H1 (cell line): ENCODE measurements at regions of chr15 and their contacts with region 1.

Region 1: DNA sequence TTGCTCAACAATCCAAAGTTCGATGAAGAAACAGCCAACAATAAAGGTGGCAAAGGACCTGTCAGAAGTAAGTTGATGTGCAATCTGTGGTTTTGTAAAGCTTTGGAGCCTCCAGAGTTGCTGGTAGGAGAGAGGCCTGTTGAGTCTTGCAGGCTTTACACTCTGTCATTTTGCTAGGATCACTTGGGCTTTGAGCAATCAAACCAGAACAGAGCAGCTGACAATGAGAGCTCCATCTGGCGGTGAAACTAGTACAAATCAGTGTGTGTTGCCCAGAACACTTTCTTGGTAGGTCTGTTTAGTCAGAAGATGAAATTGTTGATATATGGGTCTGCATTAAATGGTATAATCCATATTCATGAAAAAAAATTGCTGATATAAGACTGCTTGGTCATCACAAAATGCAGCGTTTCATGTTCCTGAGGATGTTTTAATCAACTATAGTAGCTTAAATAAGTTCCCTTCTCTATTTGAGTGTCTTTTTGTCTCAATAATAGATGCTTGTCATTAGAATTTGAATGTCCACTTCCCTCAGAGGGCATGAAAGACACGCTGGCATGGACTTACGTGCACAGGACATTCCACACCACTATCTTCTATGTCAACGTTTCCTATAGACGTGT is 25.7 kb downstream of the TMOD2 start:
- DNase-seq: peak in 1 of 2 experiments; percentile 63
- H3K4me3 ChIP-seq: no peak overlapping the region
- H3K27ac ChIP-seq: no peak overlapping the region
- H3K4me1 ChIP-seq: peaks cover 0 to 2% (median 0%) of the 10 kb centered on the region in 4 experiments; a peak in 2 of 7 replicates
- H3K27me3 ChIP-seq: no peaks in the 10 kb centered on the region
- CTCF ChIP-seq: peak in 2 of 3 experiments; percentile 85 to 87; a peak in 3 of 4 replicates
- EP300 ChIP-seq: no peak
- POLR2A ChIP-seq: no peak
- RAD21 ChIP-seq: peak; percentile 61 to 71

Region 2: DNA sequence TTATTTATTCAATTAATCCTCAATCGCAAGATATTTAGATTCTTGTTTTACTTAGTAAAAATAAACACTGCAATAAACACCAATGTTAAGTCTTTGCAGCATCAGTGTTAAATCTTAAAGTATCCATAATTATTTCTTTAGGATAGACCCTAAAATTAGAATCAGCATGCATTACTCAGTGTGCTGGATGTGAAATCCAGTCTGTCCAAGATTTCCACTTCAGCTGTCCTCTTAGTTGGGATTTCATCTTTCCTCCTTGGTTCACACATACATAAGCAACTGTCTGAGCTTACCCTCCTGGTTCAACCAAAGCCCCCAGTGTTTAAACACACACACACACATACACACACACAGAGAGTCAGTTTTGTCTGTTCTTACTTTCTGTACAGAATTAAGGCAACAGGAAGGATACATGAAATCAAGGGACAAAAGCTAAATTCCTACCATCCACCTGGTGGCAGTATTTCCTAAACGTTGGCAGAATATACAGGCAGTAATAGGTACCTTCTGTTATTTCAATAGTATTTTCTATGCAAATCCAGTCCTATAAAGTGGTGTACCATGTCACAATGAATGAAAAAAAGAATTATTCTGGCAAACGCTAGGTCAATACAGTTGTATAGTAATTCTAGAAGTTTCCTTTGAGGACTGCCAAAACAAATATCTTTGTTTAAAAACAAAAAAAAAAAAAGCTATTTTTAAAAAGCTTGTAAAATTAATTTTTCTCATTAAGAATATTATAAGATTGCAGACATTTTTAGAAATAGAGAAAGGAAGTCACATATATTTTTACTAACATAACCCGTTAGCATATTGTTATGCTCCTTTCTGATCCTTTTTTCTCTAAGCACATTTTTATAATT is 127.2 kb before region 1 on chr15:
- CTCF ChIA-PET with region 1: interaction called, 243 read pairs
- POLR2A ChIA-PET with region 1: interaction called, 7 read pairs
- DNase-seq: no peak
- H3K4me3 ChIP-seq: no peak overlapping the region
- H3K27ac ChIP-seq: no peak overlapping the region
- H3K4me1 ChIP-seq: no peaks in the 10 kb centered on the region
- H3K27me3 ChIP-seq: no peaks in the 10 kb centered on the region
- CTCF ChIP-seq: peak in 2 of 3 experiments; percentile 70 to 75; a peak in 3 of 4 replicates
- EP300 ChIP-seq: no peak
- POLR2A ChIP-seq: no peak
- RAD21 ChIP-seq: peak; percentile 93 to 95

Region 3: GRCh38 chr15:51672913-51673857 is 103.9 kb before region 1 on chr15:
- CTCF ChIA-PET with region 1: interaction called, 13 read pairs
- POLR2A ChIA-PET with region 1: no interaction called
- DNase-seq: no peak
- H3K4me3 ChIP-seq: no peak overlapping the region
- H3K27ac ChIP-seq: no peak overlapping the region
- H3K4me1 ChIP-seq: peaks cover 0 to 3% (median 0%) of the 10 kb centered on the region in 4 experiments; a peak in 1 of 7 replicates
- H3K27me3 ChIP-seq: no peaks in the 10 kb centered on the region
- CTCF ChIP-seq: no peak
- EP300 ChIP-seq: no peak
- POLR2A ChIP-seq: no peak
- RAD21 ChIP-seq: no peak

Region 4: DNA sequence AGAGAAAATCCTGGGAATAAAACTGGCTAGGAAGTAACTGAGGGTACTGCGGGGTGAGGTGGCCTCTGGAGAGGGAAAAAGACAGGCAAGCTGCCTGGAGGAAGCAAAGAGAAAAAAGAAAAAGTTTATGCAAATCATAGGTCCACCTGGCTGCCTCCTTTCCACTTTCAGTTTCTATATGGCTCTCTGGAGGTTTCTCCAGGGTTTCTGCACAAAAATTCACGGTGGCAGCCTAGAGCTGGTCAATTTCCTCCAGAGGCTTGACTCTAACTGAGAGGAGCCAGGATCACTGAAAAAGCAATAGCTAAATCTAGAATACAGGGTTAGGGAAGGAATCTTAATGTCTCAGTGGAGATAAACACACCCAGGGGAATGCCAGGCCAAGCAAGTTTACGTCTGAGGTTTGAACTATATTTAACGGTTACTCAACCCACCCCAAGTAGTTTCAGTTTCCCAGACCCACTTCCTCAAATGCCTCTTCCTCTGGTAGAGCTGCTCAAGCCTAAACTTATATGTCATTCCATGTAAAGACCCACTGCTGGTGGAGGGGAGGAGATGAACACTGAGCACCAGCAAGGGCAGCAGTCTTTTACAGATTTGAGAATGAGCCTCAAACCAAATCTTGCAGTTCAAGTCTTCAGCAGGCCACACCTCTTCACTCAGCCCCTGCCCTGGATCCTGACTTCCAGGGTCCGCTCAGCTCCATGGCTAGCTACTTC is 45.4 kb before region 1 on chr15:
- CTCF ChIA-PET with region 1: interaction called, 22 read pairs
- POLR2A ChIA-PET with region 1: no interaction called
- DNase-seq: no peak
- H3K4me3 ChIP-seq: no peak overlapping the region
- H3K27ac ChIP-seq: no peak overlapping the region
- H3K4me1 ChIP-seq: peaks cover 2 to 7% (median 4%) of the 10 kb centered on the region in 4 experiments; a peak in 5 of 7 replicates
- H3K27me3 ChIP-seq: peaks cover 1 to 8% (median 4%) of the 10 kb centered on the region in 4 experiments
- CTCF ChIP-seq: no peak
- EP300 ChIP-seq: no peak
- POLR2A ChIP-seq: no peak
- RAD21 ChIP-seq: no peak

Region 5: GRCh38 chr15:51846463-51847230 is 69.6 kb after region 1 on chr15:
- CTCF ChIA-PET with region 1: interaction called, 12 read pairs
- POLR2A ChIA-PET with region 1: no interaction called
- DNase-seq: no peak
- H3K4me3 ChIP-seq: no peak overlapping the region
- H3K27ac ChIP-seq: no peak overlapping the region
- H3K4me1 ChIP-seq: peaks cover 0 to 2% (median 0%) of the 10 kb centered on the region in 4 experiments; a peak in 2 of 7 replicates
- H3K27me3 ChIP-seq: no peaks in the 10 kb centered on the region
- CTCF ChIP-seq: no peak
- EP300 ChIP-seq: no peak
- POLR2A ChIP-seq: no peak
- RAD21 ChIP-seq: no peak

Region 6: GRCh38 chr15:52232327-52232726 is 455.3 kb after region 1 on chr15:
- CTCF ChIA-PET with region 1: no interaction called
- POLR2A ChIA-PET with region 1: no interaction called
- DNase-seq: no peak
- H3K4me3 ChIP-seq: no peak overlapping the region
- H3K27ac ChIP-seq: no peak overlapping the region
- H3K4me1 ChIP-seq: no peaks in the 10 kb centered on the region
- H3K27me3 ChIP-seq: no peaks in the 10 kb centered on the region
- CTCF ChIP-seq: no peak
- EP300 ChIP-seq: no peak
- POLR2A ChIP-seq: no peak
- RAD21 ChIP-seq: no peak